ENCODE measurements at regions of chr7 and their contacts with region 1.

Region 1: DNA sequence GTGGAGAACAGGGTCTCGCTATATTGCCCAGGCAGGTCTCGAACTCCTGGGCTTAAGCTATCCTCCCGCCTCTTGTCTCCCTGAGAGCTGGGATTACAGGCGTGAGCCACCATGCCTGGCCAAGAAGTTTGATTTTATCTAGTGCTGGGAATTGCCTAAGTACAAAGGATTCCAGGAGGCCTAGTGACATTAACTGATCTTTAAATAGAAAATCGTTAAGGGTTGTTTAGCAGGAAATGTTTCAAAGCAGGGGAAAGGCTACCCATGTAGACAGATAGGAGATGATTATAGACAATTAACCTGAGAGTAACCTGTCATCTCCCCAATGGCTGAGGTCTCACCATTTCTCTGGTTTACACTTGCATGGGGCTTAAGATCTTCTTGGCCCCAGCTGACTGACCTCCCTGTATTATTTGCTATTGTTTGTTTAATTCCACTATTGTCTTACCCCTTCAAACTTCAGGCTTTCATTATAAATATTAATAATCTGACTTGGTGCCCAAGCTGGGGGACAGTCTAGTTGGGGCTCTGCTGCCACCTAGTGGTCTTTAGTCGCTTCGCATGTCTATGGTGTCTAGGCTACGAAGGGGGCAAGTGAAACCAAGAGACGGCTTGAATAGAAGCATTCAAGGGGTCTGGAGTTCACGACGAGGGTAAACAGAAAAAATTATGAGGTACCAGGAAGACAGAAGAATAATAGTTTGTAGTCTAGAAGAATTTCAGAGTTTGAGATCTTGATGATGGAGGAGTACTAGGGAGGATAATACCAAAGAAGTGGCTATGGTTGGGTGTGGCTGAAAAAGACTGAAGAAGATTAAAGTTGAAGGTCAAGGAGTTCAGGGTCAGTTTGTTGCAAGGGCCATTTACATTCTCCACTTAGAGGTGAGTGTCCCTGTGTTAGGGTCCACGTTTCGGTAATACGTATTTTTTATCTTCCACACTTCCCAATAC is 40.4 kb upstream of the BPGM start:
- DNase-seq: no peak
- H3K4me3 ChIP-seq: peak overlapping the region; percentile 6; the same call in 1 of the 2 replicates
- CTCF ChIP-seq: peak; percentile 77

Region 2: DNA sequence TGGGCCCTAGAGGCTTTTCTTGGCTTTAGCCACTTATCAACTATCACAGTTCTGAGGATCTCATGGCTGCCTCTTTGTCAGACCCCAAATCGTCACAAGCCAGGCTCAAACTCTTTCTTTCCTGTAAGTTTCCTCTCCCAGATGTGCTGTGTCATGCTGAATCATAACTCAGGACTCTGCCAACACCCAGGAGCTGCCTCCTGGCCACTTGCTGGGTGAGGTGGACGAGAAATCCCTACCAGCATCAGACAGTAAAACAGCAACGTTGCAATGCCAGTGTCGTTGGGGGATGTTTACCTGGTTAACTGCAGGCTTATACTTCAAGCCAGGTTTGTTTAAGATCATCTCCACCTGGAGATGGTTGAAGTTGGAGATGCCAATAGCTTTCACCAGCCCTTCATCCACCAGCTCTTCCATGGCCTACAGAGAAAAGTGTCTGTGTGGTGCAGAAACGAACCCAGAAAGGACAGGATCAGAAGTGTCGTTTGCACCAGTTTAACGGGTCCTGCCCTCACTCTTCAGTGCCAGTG is 157.5 kb before region 1 on chr7:
- CTCF ChIA-PET with region 1: interaction called, 13 read pairs
- POLR2A ChIA-PET with region 1: no interaction called
- DNase-seq: peak; percentile 60
- H3K4me3 ChIP-seq: no peak overlapping the region
- CTCF ChIP-seq: no peak

Region 3: DNA sequence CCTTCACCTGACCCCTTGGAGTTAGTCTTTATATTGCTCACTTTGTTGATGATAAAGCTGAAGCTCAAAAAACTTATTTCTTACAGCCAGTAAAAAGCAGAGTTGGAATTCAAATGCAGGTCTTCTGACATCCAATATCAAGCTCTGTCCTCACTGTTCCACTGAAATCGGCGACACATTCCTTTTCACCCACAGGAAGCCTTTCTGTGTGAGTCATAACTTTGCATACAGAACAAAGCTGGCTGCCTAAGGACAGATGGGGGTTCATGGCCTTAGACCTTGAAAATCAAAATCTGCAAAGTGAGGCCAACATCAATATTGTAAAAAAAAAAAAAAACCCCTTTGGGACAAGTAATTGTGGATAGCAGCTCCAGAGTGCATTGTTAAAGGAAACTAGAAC is 125.5 kb before region 1 on chr7:
- CTCF ChIA-PET with region 1: interaction called, 11 read pairs
- POLR2A ChIA-PET with region 1: no interaction called
- DNase-seq: no peak
- H3K4me3 ChIP-seq: no peak overlapping the region
- CTCF ChIP-seq: no peak

Region 4: DNA sequence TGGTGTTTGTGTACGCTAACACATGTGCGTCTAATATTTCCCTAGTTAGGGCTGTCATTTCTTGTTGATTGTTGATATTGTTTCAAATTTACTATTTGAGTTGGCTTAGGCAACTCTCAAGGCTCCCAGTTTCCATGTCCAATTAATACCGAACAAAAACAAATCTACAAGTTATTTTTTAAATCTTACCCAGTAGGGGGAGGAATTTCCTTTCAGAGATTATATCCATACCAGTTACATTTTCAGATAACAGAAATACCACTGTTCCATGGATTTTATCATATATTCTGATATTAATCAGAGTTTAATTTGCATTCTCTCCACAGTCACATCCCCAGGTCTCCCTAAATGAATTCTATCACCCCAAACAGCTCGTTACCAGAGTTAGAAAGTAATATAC is 86.1 kb before region 1 on chr7:
- CTCF ChIA-PET with region 1: interaction called, 145 read pairs
- POLR2A ChIA-PET with region 1: no interaction called
- DNase-seq: no peak
- H3K4me3 ChIP-seq: no peak overlapping the region
- CTCF ChIP-seq: no peak

Region 5: DNA sequence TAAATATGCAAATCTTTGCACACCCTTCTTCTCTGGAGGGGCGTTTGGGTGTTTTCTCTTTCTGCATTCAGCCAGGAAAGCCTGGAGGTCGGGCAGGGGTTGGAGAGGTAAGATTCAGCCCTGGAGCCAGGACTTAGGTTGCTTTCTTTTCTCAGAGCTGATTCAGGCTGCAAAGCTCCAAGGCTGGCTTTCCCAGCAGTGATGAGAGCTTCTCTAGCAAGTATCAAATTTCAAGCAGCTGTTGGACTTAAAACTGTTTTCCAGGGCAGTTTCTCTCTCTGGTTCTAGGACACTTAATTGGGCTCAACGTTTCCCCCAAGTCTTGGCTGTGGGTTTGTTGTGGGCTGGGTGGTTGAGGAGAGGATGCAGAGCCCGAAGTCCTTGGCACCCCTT is 78.3 kb before region 1 on chr7:
- CTCF ChIA-PET with region 1: interaction called, 14 read pairs
- POLR2A ChIA-PET with region 1: no interaction called
- DNase-seq: peak; percentile 64
- H3K4me3 ChIP-seq: peak overlapping the region; percentile 33; the same call in 1 of the 2 replicates
- CTCF ChIP-seq: no peak

Region 6: GRCh38 chr7:134547397-134548054 is 58.7 kb before region 1 on chr7:
- CTCF ChIA-PET with region 1: interaction called, 29 read pairs
- POLR2A ChIA-PET with region 1: no interaction called
- DNase-seq: no peak
- H3K4me3 ChIP-seq: peak overlapping the region; percentile 57
- CTCF ChIP-seq: peak; percentile 65

Region 7: GRCh38 chr7:134587750-134588149 is 18.5 kb before region 1 on chr7:
- CTCF ChIA-PET with region 1: no interaction called
- POLR2A ChIA-PET with region 1: no interaction called
- DNase-seq: no peak
- H3K4me3 ChIP-seq: no peak overlapping the region
- CTCF ChIP-seq: no peak

Region 8: GRCh38 chr7:134619627-134620331 is 13.5 kb after region 1 on chr7:
- CTCF ChIA-PET with region 1: interaction called, 56 read pairs
- POLR2A ChIA-PET with region 1: no interaction called
- DNase-seq: peak; percentile 76
- H3K4me3 ChIP-seq: no peak overlapping the region
- CTCF ChIP-seq: no peak